Naive thymus-derived CD4-positive, alpha-beta T cell (primary cell): ENCODE measurements at regions of chr7 and their contacts with region 1.

Region 1: GRCh38 chr7:131107337-131108211 is 220.1 kb upstream of the MKLN1 start:
- DNase-seq: peak; percentile 53 to 90 (median 84)
- ATAC-seq: peak; percentile 38
- H3K4me3 ChIP-seq: peak overlapping the region; percentile 98
- H3K4me3 Mint-ChIP-seq: peak overlapping the region; percentile 86 to 100 (median 97)
- H3K27ac ChIP-seq: peak overlapping the region; percentile 98
- H3K27ac Mint-ChIP-seq: peak overlapping the region; percentile 95 to 100 (median 98)
- H3K4me1 ChIP-seq: peaks cover 42 to 46% of the 10 kb centered on the region in 2 donors
- H3K4me1 Mint-ChIP-seq: peaks cover 48 to 69% (median 58%) of the 10 kb centered on the region in 7 donors
- H3K27me3 ChIP-seq: no peaks in the 10 kb centered on the region
- H3K27me3 Mint-ChIP-seq: peaks cover 0 to 5% (median 0%) of the 10 kb centered on the region in 5 donors

Region 2: DNA sequence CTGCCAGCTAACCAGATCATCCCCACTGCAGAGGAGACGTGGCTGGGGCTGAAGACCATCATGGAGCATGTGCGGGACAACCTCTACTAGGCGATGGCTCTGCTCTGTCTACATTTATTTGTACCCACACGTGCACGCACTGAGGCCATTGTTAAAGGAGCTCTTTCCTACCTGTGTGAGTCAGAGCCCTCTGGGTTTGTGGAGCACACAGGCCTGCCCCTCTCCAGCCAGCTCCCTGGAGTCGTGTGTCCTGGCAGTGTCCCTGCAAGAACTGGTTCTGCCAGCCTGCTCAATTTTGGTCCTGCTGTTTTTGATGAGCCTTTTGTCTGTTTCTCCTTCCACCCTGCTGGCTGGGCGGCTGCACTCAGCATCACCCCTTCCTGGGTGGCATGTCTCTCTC is 785.0 kb before region 1 on chr7:
- CTCF ChIA-PET with region 1: no interaction called
- POLR2A ChIA-PET with region 1: no interaction called
- intact Hi-C with region 1: no loop called
- DNase-seq: no peak
- ATAC-seq: no peak
- H3K4me3 ChIP-seq: no peak overlapping the region
- H3K4me3 Mint-ChIP-seq: no peak overlapping the region
- H3K27ac ChIP-seq: no peak overlapping the region
- H3K27ac Mint-ChIP-seq: peak overlapping the region in 2 of 9 donors; percentile 47 to 48
- H3K4me1 ChIP-seq: no peaks in the 10 kb centered on the region
- H3K4me1 Mint-ChIP-seq: peaks cover 0 to 3% (median 0%) of the 10 kb centered on the region in 7 donors
- H3K27me3 ChIP-seq: no peaks in the 10 kb centered on the region
- H3K27me3 Mint-ChIP-seq: no peaks in the 10 kb centered on the region

Region 3: GRCh38 chr7:130560970-130561369 is 546.6 kb before region 1 on chr7:
- CTCF ChIA-PET with region 1: no interaction called
- POLR2A ChIA-PET with region 1: no interaction called
- intact Hi-C with region 1: no loop called
- DNase-seq: peak in 5 of 9 donors; percentile 3 to 29 (median 13)
- ATAC-seq: peak; percentile 57
- H3K4me3 ChIP-seq: no peak overlapping the region
- H3K4me3 Mint-ChIP-seq: no peak overlapping the region
- H3K27ac ChIP-seq: no peak overlapping the region
- H3K27ac Mint-ChIP-seq: peak overlapping the region in 1 of 9 donors; percentile 52
- H3K4me1 ChIP-seq: no peaks in the 10 kb centered on the region
- H3K4me1 Mint-ChIP-seq: peaks cover 0 to 7% (median 0%) of the 10 kb centered on the region in 7 donors
- H3K27me3 ChIP-seq: no peaks in the 10 kb centered on the region
- H3K27me3 Mint-ChIP-seq: no peaks in the 10 kb centered on the region

Region 4: GRCh38 chr7:130668257-130669084 is 439.1 kb before region 1 on chr7 and contains the start of gene COPG2:
- CTCF ChIA-PET with region 1: no interaction called
- POLR2A ChIA-PET with region 1: no interaction called
- intact Hi-C with region 1: loop called in 1 of 2 experiments (anchors 5 kb)
- DNase-seq: peak; percentile 26 to 90 (median 46)
- ATAC-seq: peak; percentile 93
- H3K4me3 ChIP-seq: peak within 1 kb of the TSS; percentile 64
- H3K4me3 Mint-ChIP-seq: peak within 1 kb of the TSS; percentile 85 to 95 (median 90)
- H3K27ac ChIP-seq: peak within 1 kb of the TSS; percentile 73
- H3K27ac Mint-ChIP-seq: peak within 1 kb of the TSS; percentile 38 to 93 (median 81)
- H3K4me1 ChIP-seq: no peaks in the 10 kb centered on the region
- H3K4me1 Mint-ChIP-seq: peaks cover 6 to 23% (median 21%) of the 10 kb centered on the region in 7 donors
- H3K27me3 ChIP-seq: no peaks in the 10 kb centered on the region
- H3K27me3 Mint-ChIP-seq: peaks cover 0 to 11% (median 0%) of the 10 kb centered on the region in 5 donors
- total RNA-seq, gene COPG2: 8.1 to 12.4 (median 9.4) TPM

Region 5: GRCh38 chr7:130947792-130948580 is 159.6 kb before region 1 on chr7:
- CTCF ChIA-PET with region 1: no interaction called
- POLR2A ChIA-PET with region 1: no interaction called
- intact Hi-C with region 1: no loop called
- DNase-seq: peak in 4 of 9 donors; percentile 26 to 41 (median 30)
- ATAC-seq: peak; percentile 30
- H3K4me3 ChIP-seq: peak overlapping the region; percentile 7
- H3K4me3 Mint-ChIP-seq: peak overlapping the region; percentile 42 to 72 (median 62)
- H3K27ac ChIP-seq: peak overlapping the region; percentile 16
- H3K27ac Mint-ChIP-seq: peak overlapping the region in 8 of 9 donors; percentile 49 to 95 (median 74)
- H3K4me1 ChIP-seq: peaks cover 49 to 84% of the 10 kb centered on the region in 2 donors
- H3K4me1 Mint-ChIP-seq: peaks cover 42 to 62% (median 60%) of the 10 kb centered on the region in 7 donors
- H3K27me3 ChIP-seq: no peaks in the 10 kb centered on the region
- H3K27me3 Mint-ChIP-seq: no peaks in the 10 kb centered on the region

Region 6: DNA sequence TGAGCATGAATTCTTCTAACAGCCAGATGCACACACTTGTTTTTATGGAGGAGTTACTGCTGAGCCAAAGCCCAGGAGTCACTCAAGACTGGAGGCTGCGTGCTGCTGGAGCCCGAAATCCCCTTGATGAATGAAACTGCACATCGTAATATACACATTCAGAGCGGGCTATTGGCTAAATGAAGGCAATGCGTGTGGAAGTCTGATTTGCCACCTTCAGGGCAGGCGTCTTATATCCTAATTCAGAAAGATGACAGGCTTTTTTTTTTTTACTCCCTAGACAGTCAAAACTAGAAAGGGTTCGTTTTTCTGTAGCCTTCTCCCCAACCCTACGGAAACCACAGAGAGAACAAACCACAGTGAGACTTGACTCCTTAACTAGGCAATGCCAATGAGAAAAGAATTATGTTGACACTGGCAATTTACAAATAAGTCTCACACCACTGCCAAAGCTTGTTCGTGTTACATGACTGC is 146.4 kb before region 1 on chr7:
- CTCF ChIA-PET with region 1: no interaction called
- POLR2A ChIA-PET with region 1: interaction called, 3 read pairs
- intact Hi-C with region 1: loop called in 1 of 2 experiments (anchors 1 kb)
- DNase-seq: peak; percentile 37 to 88 (median 79)
- ATAC-seq: peak; percentile 87
- H3K4me3 ChIP-seq: peak overlapping the region; percentile 65
- H3K4me3 Mint-ChIP-seq: peak overlapping the region; percentile 87 to 98 (median 90)
- H3K27ac ChIP-seq: peak overlapping the region; percentile 80
- H3K27ac Mint-ChIP-seq: peak overlapping the region in 8 of 9 donors; percentile 94 to 100 (median 97)
- H3K4me1 ChIP-seq: peaks cover 50 to 60% of the 10 kb centered on the region in 2 donors
- H3K4me1 Mint-ChIP-seq: peaks cover 53 to 76% (median 69%) of the 10 kb centered on the region in 7 donors
- H3K27me3 ChIP-seq: no peaks in the 10 kb centered on the region
- H3K27me3 Mint-ChIP-seq: no peaks in the 10 kb centered on the region

Region 7: DNA sequence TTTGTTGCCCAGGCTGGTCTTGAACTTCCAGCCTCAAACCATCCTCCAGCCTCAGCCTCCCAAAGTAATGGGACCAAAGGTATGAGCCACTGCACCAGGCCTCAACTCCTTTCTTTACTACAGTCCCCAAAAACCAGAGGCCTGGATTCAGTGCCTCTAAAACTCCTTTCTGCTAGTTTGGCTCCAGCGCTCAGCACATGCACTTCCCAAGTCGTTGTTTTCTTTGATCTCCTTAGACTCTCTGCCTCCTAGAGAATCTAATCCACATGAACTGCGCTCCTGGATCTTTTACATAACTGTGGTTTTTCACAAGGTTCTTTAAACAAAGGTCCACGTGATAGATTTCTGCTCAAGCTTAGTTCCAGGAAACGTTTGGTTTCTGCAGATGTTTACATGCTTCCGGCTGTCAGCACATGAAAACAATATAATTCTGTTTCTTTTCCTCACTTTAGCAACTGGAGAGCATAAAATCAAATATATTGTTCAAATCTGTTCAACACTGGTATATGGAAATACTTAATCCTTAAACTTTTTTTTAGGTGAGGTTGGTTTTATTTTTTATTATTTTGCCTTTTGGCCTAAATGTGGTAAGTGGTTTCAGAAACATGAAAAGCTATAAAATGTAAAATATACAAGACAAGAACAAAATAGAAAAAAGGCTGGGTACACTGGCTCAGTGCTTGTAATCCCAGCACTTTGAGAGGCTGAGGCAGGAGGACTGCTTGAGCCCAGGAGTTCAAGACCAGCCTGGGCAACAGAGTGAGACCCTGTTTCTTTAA is 50.4 kb before region 1 on chr7:
- CTCF ChIA-PET with region 1: interaction called, 3 read pairs
- POLR2A ChIA-PET with region 1: interaction called, 17 read pairs
- intact Hi-C with region 1: loop called (anchors 1 kb)
- DNase-seq: peak in 7 of 9 donors; percentile 56 to 82 (median 76)
- ATAC-seq: peak; percentile 67
- H3K4me3 ChIP-seq: peak overlapping the region; percentile 11
- H3K4me3 Mint-ChIP-seq: peak overlapping the region; percentile 72 to 93 (median 82)
- H3K27ac ChIP-seq: peak overlapping the region; percentile 76
- H3K27ac Mint-ChIP-seq: peak overlapping the region; percentile 94 to 100 (median 98)
- H3K4me1 ChIP-seq: peaks cover 69 to 77% of the 10 kb centered on the region in 2 donors
- H3K4me1 Mint-ChIP-seq: peaks cover 54 to 87% (median 72%) of the 10 kb centered on the region in 7 donors
- H3K27me3 ChIP-seq: no peaks in the 10 kb centered on the region
- H3K27me3 Mint-ChIP-seq: no peaks in the 10 kb centered on the region

Region 8: GRCh38 chr7:131096267-131096927 is 11.2 kb before region 1 on chr7:
- CTCF ChIA-PET with region 1: interaction called, 4 read pairs
- POLR2A ChIA-PET with region 1: interaction called, 10 read pairs
- intact Hi-C with region 1: loop called in 1 of 2 experiments (anchors 1 kb)
- DNase-seq: no peak
- ATAC-seq: no peak
- H3K4me3 ChIP-seq: no peak overlapping the region
- H3K4me3 Mint-ChIP-seq: peak overlapping the region in 6 of 10 donors; percentile 1 to 47 (median 26)
- H3K27ac ChIP-seq: no peak overlapping the region
- H3K27ac Mint-ChIP-seq: peak overlapping the region in 5 of 9 donors; percentile 10 to 69 (median 43)
- H3K4me1 ChIP-seq: peaks cover 50 to 80% of the 10 kb centered on the region in 2 donors
- H3K4me1 Mint-ChIP-seq: peaks cover 31 to 100% (median 86%) of the 10 kb centered on the region in 7 donors
- H3K27me3 ChIP-seq: no peaks in the 10 kb centered on the region
- H3K27me3 Mint-ChIP-seq: no peaks in the 10 kb centered on the region

Region 9: DNA sequence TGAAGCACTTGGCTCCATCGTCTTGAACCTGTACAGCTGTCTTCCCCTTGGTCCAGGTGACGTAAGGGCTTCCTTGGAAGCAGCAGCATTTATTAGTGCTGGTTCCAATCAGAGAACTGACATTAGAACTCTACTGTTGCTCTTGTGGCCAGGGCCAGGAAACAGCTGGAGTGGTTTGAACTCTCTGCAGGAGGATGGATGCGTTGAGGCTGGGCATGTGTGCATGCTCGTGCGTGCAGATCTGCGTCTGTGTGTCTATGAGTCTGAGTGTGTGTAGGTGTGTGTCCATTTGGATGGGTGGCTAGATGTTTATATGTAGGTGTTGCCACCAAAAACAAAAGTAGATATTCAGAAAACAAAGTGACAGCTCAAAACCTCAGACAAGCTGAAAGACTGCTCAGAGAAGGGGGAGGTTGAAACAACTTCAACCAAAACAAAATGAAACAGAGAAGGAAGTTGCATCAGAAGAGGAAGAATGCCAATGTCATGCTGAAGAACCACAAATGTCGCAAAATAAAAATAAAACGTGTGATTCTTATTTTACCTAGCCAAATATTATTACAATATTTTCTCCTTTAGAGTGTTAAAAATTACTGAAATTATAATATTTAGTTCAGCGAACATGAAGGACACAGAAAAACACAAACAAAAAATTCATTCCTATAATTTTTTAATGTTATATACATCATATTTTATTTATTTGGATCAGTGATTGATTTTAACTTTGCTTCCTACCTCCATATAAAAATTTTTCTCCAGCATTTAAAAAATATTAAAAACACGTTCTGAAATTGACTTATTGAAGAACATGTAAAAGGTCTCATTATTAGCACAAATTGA is 124.0 kb after region 1 on chr7:
- CTCF ChIA-PET with region 1: interaction called, 3 read pairs
- POLR2A ChIA-PET with region 1: interaction called, 24 read pairs
- intact Hi-C with region 1: loop called (anchors 1 kb)
- DNase-seq: peak; percentile 30 to 83 (median 74)
- ATAC-seq: peak; percentile 85
- H3K4me3 ChIP-seq: peak overlapping the region; percentile 33
- H3K4me3 Mint-ChIP-seq: peak overlapping the region; percentile 63 to 88 (median 82)
- H3K27ac ChIP-seq: peak overlapping the region; percentile 59
- H3K27ac Mint-ChIP-seq: peak overlapping the region; percentile 66 to 94 (median 91)
- H3K4me1 ChIP-seq: peaks cover 24 to 28% of the 10 kb centered on the region in 2 donors
- H3K4me1 Mint-ChIP-seq: peaks cover 21 to 67% (median 45%) of the 10 kb centered on the region in 7 donors
- H3K27me3 ChIP-seq: no peaks in the 10 kb centered on the region
- H3K27me3 Mint-ChIP-seq: no peaks in the 10 kb centered on the region

Region 10: GRCh38 chr7:131424219-131424822 is 316.7 kb after region 1 on chr7:
- CTCF ChIA-PET with region 1: interaction called, 3 read pairs
- POLR2A ChIA-PET with region 1: no interaction called
- intact Hi-C with region 1: loop called in 1 of 2 experiments (anchors 1 kb)
- DNase-seq: peak in 7 of 9 donors; percentile 18 to 50 (median 44)
- ATAC-seq: peak; percentile 90
- H3K4me3 ChIP-seq: no peak overlapping the region
- H3K4me3 Mint-ChIP-seq: no peak overlapping the region
- H3K27ac ChIP-seq: no peak overlapping the region
- H3K27ac Mint-ChIP-seq: peak overlapping the region in 2 of 9 donors; percentile 11
- H3K4me1 ChIP-seq: no peaks in the 10 kb centered on the region
- H3K4me1 Mint-ChIP-seq: peaks cover 0 to 20% (median 13%) of the 10 kb centered on the region in 7 donors
- H3K27me3 ChIP-seq: no peaks in the 10 kb centered on the region
- H3K27me3 Mint-ChIP-seq: no peaks in the 10 kb centered on the region